ENCODE measurements at regions of chr12 and their contacts with region 1.

Region 1: DNA sequence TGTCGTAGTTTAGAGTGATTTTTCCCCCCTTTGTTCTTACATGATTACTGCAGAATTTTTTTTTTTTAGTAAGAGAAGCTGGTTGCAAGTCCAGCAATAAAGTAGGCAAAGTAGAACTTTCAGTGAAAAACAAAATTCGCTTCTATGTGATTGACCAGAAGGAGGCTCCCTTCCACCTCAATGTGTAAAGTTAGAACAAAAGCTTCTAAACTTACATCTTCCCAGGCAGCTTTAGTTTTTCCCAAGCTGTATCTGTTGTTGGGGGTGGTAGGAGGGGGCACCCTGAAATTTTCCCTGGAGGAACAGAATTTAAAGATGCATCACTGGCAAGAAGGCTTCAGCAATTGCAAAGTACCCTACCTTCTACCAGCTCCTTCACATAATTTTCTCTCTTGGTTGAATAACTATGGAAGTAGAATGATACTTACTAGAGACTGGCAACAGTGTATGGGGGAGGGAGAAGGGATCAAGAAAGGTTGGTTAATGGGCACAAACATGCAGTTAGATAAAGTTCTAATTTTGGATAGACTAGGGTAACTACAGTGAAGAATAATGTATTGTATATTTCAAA is 87.3 kb upstream of the E2F7 start:
- DNase-seq: no peak
- H3K4me3 ChIP-seq: no peak overlapping the region
- H3K27ac ChIP-seq: no peak overlapping the region
- H3K4me1 ChIP-seq: no peaks in the 10 kb centered on the region
- H3K27me3 ChIP-seq: no peaks in the 10 kb centered on the region
- CTCF ChIP-seq: peak; percentile 68

Region 2: GRCh38 chr12:77049767-77050353 is 102.8 kb before region 1 on chr12:
- intact Hi-C with region 1: no loop called
- DNase-seq: no peak
- H3K4me3 ChIP-seq: no peak overlapping the region
- H3K27ac ChIP-seq: no peak overlapping the region
- H3K4me1 ChIP-seq: no peaks in the 10 kb centered on the region
- H3K27me3 ChIP-seq: no peaks in the 10 kb centered on the region
- CTCF ChIP-seq: peak; percentile 82

Region 3: DNA sequence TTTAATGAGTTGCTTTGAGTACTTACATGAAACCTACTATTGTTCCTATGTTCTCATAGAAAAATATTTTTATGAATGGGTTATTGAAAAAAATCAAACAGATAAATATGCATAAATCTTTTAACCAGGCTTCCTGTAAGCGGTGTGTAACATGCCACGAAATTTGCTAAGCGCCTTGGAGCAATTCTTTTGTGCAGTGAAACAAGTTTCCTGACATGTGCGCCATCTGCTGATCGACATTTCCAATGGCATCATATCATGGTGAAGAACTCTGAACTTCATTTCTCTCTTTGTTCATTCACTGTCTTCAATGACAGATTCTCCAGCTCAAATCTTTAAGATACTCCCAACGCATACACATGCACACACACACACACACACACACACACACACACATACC is 532.4 kb after region 1 on chr12:
- intact Hi-C with region 1: loop called (anchors 5 kb)
- DNase-seq: no peak
- H3K4me3 ChIP-seq: peak overlapping the region; percentile 31
- H3K27ac ChIP-seq: no peak overlapping the region
- H3K4me1 ChIP-seq: peaks cover 4% of the 10 kb centered on the region
- H3K27me3 ChIP-seq: no peaks in the 10 kb centered on the region
- CTCF ChIP-seq: peak; percentile 63

Measured in left ventricle myocardium inferior (tissue), 1 donor.